WTC11 (cell line): ENCODE measurements at regions of chr6 and their contacts with region 1.

Region 1: DNA sequence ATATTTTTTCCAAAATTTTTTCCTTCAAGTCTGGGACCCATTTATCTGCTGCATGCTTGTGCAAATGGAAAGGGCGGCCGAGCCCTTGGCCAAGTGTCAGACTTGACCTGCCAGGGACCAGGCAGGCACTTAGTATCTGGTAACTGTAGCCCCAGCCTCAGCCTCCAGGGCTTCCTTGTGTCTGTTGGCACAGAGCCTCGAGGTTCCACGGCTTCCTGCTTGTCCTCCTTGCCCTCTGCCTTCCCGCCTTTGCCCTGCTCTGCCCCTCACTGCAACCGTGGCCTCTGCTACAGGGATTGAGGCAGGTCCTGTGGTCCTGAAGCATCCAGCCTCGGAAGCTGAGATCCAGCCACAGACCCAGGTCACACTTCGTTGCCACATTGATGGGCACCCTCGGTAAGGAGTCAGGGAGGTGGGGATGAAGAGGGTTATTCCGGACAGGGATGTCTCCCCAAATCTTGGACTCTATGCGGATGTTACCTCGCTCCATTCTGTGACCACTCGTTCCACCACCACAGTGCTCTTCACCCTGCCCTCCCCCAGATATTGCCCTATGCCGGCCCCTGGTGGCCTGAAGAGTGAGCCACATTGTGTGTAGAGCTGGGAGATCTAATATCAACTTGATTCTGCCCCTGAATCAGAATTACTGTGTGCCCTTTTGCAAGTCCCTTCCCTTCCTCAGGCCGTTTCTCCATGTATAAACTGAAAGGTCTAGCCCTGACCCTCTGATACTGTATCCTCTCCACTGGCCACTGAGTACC is 41.5 kb upstream of the SRF start:
- DNase-seq: peak; percentile 58
- ATAC-seq: peak; percentile 86
- H3K4me3 Mint-ChIP-seq: no peak overlapping the region
- H3K27ac Mint-ChIP-seq: peak overlapping the region; percentile 68; the same call in 1 of the 2 replicates
- H3K4me1 Mint-ChIP-seq: peaks cover 23% of the 10 kb centered on the region
- H3K27me3 Mint-ChIP-seq: no peaks in the 10 kb centered on the region
- CTCF ChIP-seq: no peak

Region 2: GRCh38 chr6:43053545-43054205 is 75.9 kb before region 1 on chr6 and contains the start of gene CUL7:
- CTCF ChIA-PET with region 1: no interaction called
- POLR2A ChIA-PET with region 1: no interaction called
- DNase-seq: peak; percentile 86
- ATAC-seq: peak; percentile 93
- H3K4me3 Mint-ChIP-seq: peak within 1 kb of the TSS; percentile 91
- H3K27ac Mint-ChIP-seq: peak within 1 kb of the TSS; percentile 95
- H3K4me1 Mint-ChIP-seq: peaks cover 30% of the 10 kb centered on the region
- H3K27me3 Mint-ChIP-seq: no peaks in the 10 kb centered on the region
- CTCF ChIP-seq: no peak
- total RNA-seq, gene CUL7: 20.8 to 27.9 TPM (median 27.0 TPM) in 3 replicates

Region 3: GRCh38 chr6:43075670-43076463 is 53.7 kb before region 1 on chr6 and contains the start of gene PTK7:
- CTCF ChIA-PET with region 1: interaction called, 15 read pairs
- POLR2A ChIA-PET with region 1: interaction called, 3 read pairs
- DNase-seq: peak; percentile 86
- ATAC-seq: peak; percentile 73
- H3K4me3 Mint-ChIP-seq: peak within 1 kb of the TSS; percentile 84
- H3K27ac Mint-ChIP-seq: no peak within 1 kb of the TSS
- H3K4me1 Mint-ChIP-seq: peaks cover 38% of the 10 kb centered on the region
- H3K27me3 Mint-ChIP-seq: no peaks in the 10 kb centered on the region; the same call in 1 of the 2 replicates
- CTCF ChIP-seq: no peak
- total RNA-seq, gene PTK7: 151 to 165 TPM (median 160 TPM) in 3 replicates

Region 4: DNA sequence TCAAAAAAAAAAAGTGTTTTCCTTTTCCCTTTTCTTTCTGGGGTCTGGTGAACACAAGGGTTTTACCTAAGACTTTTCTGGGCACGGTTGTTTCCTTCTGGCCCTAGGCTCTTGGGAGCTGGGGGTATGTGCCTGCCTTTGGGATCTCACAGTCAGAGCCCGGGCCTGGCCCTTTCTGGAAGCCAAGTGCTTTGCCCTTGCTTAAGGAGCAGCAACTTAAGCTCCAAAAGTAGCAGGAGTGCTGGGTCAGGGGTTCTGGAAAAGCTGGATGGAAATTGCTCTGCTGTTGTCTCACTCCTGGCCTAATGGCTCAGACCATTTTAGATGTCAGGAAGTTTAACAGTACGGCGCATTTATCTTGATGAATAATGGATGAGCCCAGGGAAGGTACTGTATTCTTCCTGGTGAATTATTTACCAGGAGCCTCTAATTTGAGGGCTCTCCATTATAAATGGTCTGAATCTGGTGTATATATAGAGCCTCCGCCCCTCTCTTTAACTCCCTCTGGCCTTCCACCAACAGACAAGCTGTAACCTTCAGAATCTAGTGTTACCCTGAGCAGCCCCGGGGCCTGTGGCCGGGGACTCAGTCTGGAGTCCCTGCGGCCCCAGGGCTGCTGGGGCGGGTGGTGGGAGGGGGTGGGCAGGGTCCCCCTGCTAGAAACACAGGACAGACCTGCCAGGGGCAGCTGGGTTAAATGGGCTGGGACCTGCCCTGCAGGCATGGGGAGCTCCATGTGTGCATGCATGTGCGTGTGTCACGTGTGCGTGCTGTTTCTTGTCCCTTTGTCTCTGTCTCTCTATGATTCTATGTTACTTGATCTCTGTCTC is 16.0 kb before region 1 on chr6:
- CTCF ChIA-PET with region 1: interaction called, 20 read pairs
- POLR2A ChIA-PET with region 1: no interaction called
- DNase-seq: no peak
- ATAC-seq: peak; percentile 73
- H3K4me3 Mint-ChIP-seq: no peak overlapping the region
- H3K27ac Mint-ChIP-seq: peak overlapping the region; percentile 96
- H3K4me1 Mint-ChIP-seq: peaks cover 33% of the 10 kb centered on the region
- H3K27me3 Mint-ChIP-seq: no peaks in the 10 kb centered on the region
- CTCF ChIP-seq: no peak

Region 5: GRCh38 chr6:43421831-43422230 is 292.2 kb after region 1 on chr6:
- CTCF ChIA-PET with region 1: no interaction called
- POLR2A ChIA-PET with region 1: no interaction called
- DNase-seq: no peak
- ATAC-seq: no peak
- H3K4me3 Mint-ChIP-seq: no peak overlapping the region
- H3K27ac Mint-ChIP-seq: no peak overlapping the region
- H3K4me1 Mint-ChIP-seq: no peaks in the 10 kb centered on the region
- H3K27me3 Mint-ChIP-seq: peaks cover 44% of the 10 kb centered on the region
- CTCF ChIP-seq: no peak